CD4-positive, alpha-beta memory T cell (primary cell): ENCODE measurements at regions of chr19 and their contacts with region 1.

Region 1: DNA sequence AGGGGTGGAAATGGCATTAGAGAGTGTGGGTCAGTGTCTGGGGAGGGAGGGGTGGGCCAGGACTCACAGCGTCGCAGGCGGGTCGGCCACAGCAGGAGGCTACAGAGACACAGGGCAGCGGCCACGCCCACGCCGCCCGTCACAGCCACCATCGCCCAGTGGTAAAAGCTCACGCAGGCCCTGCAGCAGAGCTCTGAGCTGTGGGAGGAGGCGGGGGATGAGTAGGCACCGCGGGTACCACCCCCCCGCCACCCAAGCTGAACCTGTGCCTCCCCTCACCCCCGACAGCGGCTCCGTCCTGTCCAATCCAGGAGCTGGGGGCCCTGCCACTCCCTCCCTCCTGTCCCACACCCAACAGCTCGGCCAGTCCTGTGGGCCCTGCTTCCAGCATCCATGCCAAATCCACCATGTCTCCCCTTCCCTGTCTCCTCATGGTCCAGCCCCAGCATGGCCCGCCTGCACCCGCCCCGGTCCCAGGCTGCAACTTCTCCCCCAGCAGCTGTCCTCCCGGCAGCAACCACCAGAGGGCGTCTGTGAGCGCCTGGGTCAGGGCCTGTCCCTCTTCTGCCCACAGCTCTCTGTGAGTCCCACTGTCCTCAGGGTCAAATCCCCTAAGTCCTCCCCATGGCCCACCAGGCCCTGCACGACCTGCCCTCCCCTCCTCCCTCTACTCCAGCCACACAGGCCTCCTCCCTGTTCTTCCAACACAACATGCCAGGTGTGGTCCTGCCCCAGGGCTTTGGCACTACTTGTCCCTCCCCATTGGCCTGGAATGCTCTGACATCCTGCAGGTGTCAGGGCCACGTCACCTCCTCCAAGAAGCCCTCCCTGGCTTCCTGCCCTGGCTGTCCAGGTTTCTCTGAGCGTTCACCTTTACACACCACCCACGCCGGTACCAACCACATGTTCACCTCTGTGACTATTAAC is 6.0 kb downstream of the TEKTIP1 start:
- DNase-seq: peak; percentile 67 to 80 (median 69)
- H3K4me3 ChIP-seq: no peak overlapping the region
- H3K4me3 Mint-ChIP-seq: no peak overlapping the region
- H3K27ac ChIP-seq: no peak overlapping the region
- H3K27ac Mint-ChIP-seq: peak overlapping the region; percentile 35 to 78 (median 74)
- H3K4me1 ChIP-seq: peaks cover 7% of the 10 kb centered on the region
- H3K4me1 Mint-ChIP-seq: peaks cover 5 to 12% (median 9%) of the 10 kb centered on the region in 4 donors
- H3K27me3 ChIP-seq: no peaks in the 10 kb centered on the region
- H3K27me3 Mint-ChIP-seq: no peaks in the 10 kb centered on the region

Region 2: DNA sequence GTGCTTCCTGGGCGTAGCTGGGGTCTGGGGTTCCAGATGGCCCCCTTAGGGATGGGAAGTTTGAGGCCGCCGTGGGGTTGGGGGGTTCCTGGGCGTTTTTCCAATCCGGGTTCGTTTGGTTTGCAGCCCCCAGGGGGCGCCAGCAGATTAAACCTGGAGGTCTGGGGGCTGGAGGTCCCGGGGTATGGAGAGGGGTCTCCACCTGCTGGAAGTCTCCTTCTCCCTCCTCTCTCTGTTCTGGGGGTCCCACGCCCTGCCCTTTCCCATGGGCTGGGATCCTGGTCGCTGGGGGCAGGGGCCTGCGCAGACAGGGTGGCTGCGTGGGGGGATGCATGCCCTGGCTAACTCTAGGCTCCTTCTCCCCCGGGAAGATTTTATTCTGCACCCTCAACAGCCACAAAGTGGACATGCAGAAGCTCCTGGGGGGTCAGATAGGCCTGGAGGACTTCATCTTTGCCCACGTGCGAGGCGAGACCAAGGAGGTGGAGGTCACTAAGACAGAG is 41.2 kb after region 1 on chr19:
- CTCF ChIA-PET with region 1: interaction called, 12 read pairs
- POLR2A ChIA-PET with region 1: no interaction called
- intact Hi-C with region 1: loop called (anchors 5 kb)
- DNase-seq: peak in 3 of 5 donors; percentile 21 to 33 (median 29)
- H3K4me3 ChIP-seq: peak overlapping the region in 1 of 2 donors; percentile 38
- H3K4me3 Mint-ChIP-seq: peak overlapping the region in 6 of 8 donors; percentile 29 to 59 (median 46)
- H3K27ac ChIP-seq: no peak overlapping the region
- H3K27ac Mint-ChIP-seq: peak overlapping the region in 1 of 7 donors; percentile 43
- H3K4me1 ChIP-seq: peaks cover 6% of the 10 kb centered on the region
- H3K4me1 Mint-ChIP-seq: no peaks in the 10 kb centered on the region
- H3K27me3 ChIP-seq: no peaks in the 10 kb centered on the region
- H3K27me3 Mint-ChIP-seq: no peaks in the 10 kb centered on the region

Region 3: GRCh38 chr19:3618144-3618810 is 73.3 kb after region 1 on chr19:
- CTCF ChIA-PET with region 1: interaction called, 7 read pairs
- POLR2A ChIA-PET with region 1: no interaction called
- intact Hi-C with region 1: loop called (anchors 1 kb)
- DNase-seq: peak in 4 of 5 donors; percentile 24 to 44 (median 30)
- H3K4me3 ChIP-seq: no peak overlapping the region
- H3K4me3 Mint-ChIP-seq: no peak overlapping the region
- H3K27ac ChIP-seq: no peak overlapping the region
- H3K27ac Mint-ChIP-seq: no peak overlapping the region
- H3K4me1 ChIP-seq: no peaks in the 10 kb centered on the region
- H3K4me1 Mint-ChIP-seq: peaks cover 0 to 9% (median 2%) of the 10 kb centered on the region in 4 donors
- H3K27me3 ChIP-seq: no peaks in the 10 kb centered on the region
- H3K27me3 Mint-ChIP-seq: no peaks in the 10 kb centered on the region

Region 4: DNA sequence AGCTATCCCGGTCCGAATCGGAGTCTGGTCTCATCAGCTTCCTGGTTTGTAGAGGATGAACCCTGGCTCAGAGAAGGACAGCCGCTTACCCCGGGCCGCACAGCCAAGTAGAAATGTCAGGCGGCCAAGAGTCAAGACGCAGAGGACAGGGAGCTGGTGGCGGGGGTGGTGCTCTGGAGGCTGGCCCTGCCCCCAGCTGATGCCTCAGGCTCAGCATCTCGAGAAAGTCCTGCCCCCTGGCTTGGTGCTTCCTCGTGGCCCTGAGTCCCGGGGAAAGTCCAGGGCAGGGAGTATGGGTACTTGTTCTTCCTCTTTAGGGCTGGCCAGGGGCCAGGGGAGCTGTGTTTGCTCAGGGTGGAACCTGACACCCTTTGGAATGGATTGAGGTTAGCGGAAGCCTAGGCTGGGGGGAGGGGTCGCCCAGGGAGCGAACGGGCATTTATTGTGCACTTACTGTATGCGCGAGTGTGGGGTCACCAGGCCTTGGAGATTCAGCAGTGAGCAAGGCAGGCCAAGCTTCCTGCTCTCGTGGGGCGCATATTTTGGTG is 165.3 kb after region 1 on chr19:
- CTCF ChIA-PET with region 1: no interaction called
- POLR2A ChIA-PET with region 1: no interaction called
- intact Hi-C with region 1: loop called (anchors 5 kb)
- DNase-seq: no peak
- H3K4me3 ChIP-seq: no peak overlapping the region
- H3K4me3 Mint-ChIP-seq: no peak overlapping the region
- H3K27ac ChIP-seq: no peak overlapping the region
- H3K27ac Mint-ChIP-seq: no peak overlapping the region
- H3K4me1 ChIP-seq: no peaks in the 10 kb centered on the region
- H3K4me1 Mint-ChIP-seq: peaks cover 0 to 8% (median 5%) of the 10 kb centered on the region in 4 donors
- H3K27me3 ChIP-seq: no peaks in the 10 kb centered on the region
- H3K27me3 Mint-ChIP-seq: peaks cover 0 to 5% of the 10 kb centered on the region in 2 donors